ENCODE measurements at regions of chr2 and their contacts with region 1.

Region 1: GRCh38 chr2:43484323-43484930 is 111.4 kb downstream of the THADA start:
- DNase-seq: no peak
- ATAC-seq: peak; percentile 79
- H3K4me3 ChIP-seq: no peak overlapping the region
- H3K27ac ChIP-seq: no peak overlapping the region
- H3K4me1 ChIP-seq: peaks cover 0 to 8% of the 10 kb centered on the region in 2 donors
- H3K27me3 ChIP-seq: no peaks in the 10 kb centered on the region

Region 2: DNA sequence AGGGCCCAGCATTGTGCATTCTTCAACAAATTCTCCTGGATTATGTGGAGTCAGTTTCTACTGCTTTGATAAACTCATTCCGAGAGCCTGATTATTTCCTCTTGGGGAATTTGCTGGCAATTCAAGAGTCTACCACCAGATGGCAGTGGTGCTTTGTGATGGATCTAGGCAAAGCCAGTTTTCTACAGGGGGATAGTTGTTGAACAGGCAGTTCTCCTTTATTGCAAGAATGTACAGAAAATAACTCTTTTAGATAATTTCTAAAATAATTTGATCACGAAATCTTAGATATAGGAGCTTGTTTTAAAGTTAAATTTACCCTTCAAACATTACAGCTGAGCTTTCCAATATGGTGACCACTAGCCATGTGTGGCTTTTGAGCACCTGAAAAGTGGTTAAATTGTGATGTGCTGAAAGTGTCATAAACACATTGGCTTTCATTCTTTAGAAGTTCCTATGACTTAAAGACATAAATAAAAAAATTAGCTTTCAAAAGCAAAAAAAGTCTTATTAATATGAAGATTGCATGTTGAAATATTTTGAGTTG is 625.3 kb before region 1 on chr2:
- intact Hi-C with region 1: loop called (anchors 2 to 10 kb)
- DNase-seq: no peak
- ATAC-seq: no peak
- H3K4me3 ChIP-seq: no peak overlapping the region
- H3K27ac ChIP-seq: no peak overlapping the region
- H3K4me1 ChIP-seq: no peaks in the 10 kb centered on the region
- H3K27me3 ChIP-seq: no peaks in the 10 kb centered on the region

Region 3: GRCh38 chr2:42964439-42965083 is 519.9 kb before region 1 on chr2:
- intact Hi-C with region 1: loop called in 1 of 2 experiments (anchors 5 kb)
- DNase-seq: peak; percentile 94 to 95
- ATAC-seq: peak; percentile 5
- H3K4me3 ChIP-seq: no peak overlapping the region
- H3K27ac ChIP-seq: peak overlapping the region in 1 of 2 donors; percentile 46
- H3K4me1 ChIP-seq: no peaks in the 10 kb centered on the region
- H3K27me3 ChIP-seq: no peaks in the 10 kb centered on the region

Region 4: DNA sequence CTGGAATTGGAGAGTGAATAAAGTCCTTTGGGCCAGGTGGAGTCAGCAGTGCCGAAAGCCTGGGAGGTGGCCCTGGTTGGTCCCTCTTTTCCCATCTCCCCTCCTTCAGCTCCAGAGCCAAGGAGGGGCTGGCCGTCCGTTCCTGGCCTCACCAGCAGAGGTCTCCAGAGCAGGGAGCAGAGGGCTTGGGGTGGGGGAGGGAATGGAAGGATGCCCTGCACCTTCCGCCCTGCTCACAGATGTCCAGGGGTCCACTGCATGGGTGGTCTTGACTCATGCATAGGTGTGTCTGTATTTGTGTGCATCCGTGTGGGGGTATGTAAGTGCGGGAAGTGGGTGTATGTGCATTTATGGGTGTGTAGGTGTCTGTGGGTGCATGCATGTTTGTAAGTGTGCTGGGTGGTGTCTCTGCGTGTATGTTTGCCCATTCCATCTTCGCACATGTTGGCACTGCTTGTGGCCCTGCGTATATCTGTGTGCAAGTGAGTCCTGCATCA is 459.9 kb before region 1 on chr2:
- intact Hi-C with region 1: loop called in 1 of 2 experiments (anchors 5 kb)
- DNase-seq: peak; percentile 76 to 90
- ATAC-seq: peak; percentile 64
- H3K4me3 ChIP-seq: no peak overlapping the region
- H3K27ac ChIP-seq: no peak overlapping the region
- H3K4me1 ChIP-seq: peaks cover 0 to 1% of the 10 kb centered on the region in 2 donors
- H3K27me3 ChIP-seq: no peaks in the 10 kb centered on the region

Region 5: DNA sequence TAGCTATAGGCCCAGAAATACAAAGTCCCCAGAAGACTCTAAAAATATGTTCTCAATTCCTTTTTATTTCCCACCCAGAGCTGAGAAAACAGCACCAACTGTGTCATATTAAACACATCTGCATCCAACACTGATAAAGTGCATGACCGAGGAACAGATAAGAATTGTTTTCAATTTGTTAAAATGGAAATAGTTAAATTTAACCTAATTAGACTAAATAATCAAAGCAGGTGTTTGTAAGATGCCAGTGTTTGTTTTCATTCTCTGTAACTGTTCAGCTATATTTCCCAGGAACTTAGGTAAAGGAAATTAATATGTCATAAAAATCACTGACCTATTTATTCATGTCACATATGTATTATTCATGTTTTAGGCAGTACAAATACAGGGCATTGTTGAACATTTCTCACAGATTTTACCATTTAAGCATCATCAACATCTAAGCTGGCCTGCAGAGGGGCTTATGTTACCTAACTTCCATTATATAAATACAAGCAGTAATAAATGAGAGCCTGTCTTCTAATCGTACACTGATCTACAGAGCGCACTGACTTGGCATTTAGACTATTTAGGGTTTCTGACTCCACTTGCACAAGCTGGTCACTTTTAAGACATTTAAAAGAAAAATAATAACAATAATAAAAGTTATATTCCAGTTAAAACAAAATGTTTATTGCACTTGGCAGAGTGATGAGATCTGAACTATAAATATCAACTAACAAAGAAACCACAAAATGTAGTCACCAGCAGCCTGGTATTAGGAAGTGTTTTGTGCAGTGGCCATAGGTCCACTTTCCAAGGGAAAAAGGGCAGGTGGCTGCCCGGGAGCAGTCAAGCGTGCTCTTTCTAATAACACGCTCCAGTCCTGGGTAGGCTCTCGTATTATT is 171.4 kb before region 1 on chr2:
- intact Hi-C with region 1: loop called in 1 of 2 experiments (anchors 5 kb)
- DNase-seq: no peak
- ATAC-seq: peak; percentile 80
- H3K4me3 ChIP-seq: no peak overlapping the region
- H3K27ac ChIP-seq: peak overlapping the region; percentile 51 to 99
- H3K4me1 ChIP-seq: peaks cover 2 to 7% of the 10 kb centered on the region in 2 donors
- H3K27me3 ChIP-seq: no peaks in the 10 kb centered on the region

Region 6: DNA sequence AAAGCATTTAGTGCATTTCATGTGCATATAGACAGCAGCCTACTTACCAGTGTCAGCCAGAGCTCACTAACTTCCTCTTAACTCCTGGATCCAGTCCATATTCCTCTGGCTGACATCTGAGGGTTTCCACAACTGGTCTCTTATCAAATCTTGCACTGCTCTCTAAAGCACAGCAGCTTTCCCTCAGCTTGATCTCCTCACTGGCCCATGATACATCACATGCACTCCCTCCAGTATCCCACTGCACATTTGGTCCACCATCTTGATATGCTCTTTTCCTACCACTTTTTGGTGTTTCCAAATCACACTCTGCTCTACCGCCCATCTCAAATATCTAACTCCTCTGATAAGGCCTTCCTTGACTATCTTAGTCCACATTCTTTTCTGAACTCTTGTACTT is 153.0 kb before region 1 on chr2:
- intact Hi-C with region 1: no loop called
- DNase-seq: no peak
- ATAC-seq: peak; percentile 44
- H3K4me3 ChIP-seq: no peak overlapping the region
- H3K27ac ChIP-seq: peak overlapping the region; percentile 22 to 73
- H3K4me1 ChIP-seq: peaks cover 2 to 9% of the 10 kb centered on the region in 2 donors
- H3K27me3 ChIP-seq: no peaks in the 10 kb centered on the region

Region 7: DNA sequence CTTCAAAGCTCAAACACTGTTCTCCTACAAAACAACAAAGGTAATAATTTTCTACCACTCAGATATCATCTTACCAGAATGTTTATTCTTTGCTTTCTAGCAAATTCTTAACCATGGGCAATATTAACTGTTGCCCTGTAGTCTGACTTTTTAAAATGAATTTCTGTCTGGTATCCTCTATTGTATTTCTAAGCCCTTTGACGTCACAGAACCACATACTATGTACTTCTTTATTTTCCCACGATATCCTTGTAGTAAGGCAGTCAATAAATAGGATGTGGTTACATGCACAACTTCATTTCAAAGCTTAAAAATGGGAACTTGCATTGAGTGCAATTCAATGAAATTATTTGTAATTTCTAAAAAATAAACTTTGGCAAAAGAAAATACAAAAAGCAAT is 52.7 kb after region 1 on chr2:
- intact Hi-C with region 1: loop called (anchors 5 kb)
- DNase-seq: no peak
- ATAC-seq: no peak
- H3K4me3 ChIP-seq: no peak overlapping the region
- H3K27ac ChIP-seq: no peak overlapping the region
- H3K4me1 ChIP-seq: peaks cover 2 to 17% of the 10 kb centered on the region in 2 donors
- H3K27me3 ChIP-seq: no peaks in the 10 kb centered on the region